ENCODE measurements at regions of chr15 and their contacts with region 1.

Region 1: DNA sequence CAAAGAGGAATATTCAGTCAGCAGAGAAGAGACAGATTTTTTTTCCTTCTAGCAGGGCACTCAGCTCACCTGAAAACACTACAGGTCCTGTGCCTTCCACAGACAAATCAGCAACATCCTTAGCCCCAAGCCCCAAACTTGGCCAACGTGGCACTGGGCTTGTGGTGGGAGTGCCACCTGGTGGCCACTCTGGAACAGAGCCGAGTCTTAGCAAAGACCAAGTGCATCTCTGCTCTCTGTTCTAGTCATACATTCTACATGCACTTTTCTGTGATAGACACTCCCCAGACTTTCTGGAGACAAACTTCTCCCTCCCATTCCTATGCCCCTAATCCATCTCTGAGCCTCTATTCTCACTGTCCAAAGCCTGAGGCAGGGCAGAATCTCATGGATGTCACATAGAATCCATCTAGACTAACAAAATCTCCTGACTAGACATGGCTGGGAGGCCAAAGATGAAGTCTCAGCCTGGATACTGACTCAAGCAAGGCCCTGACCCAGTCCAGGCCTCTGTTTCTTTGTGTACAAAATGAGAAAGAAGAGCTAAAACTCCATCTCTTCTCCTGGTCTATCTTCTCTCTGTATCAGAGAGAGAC is 5.1 kb upstream of the SEMA7A start:
- DNase-seq: peak; percentile 77
- H3K4me3 Mint-ChIP-seq: no peak overlapping the region
- H3K27ac Mint-ChIP-seq: no peak overlapping the region
- H3K4me1 Mint-ChIP-seq: no peaks in the 10 kb centered on the region
- H3K27me3 Mint-ChIP-seq: no peaks in the 10 kb centered on the region
- CTCF ChIP-seq: peak; percentile 86

Region 2: DNA sequence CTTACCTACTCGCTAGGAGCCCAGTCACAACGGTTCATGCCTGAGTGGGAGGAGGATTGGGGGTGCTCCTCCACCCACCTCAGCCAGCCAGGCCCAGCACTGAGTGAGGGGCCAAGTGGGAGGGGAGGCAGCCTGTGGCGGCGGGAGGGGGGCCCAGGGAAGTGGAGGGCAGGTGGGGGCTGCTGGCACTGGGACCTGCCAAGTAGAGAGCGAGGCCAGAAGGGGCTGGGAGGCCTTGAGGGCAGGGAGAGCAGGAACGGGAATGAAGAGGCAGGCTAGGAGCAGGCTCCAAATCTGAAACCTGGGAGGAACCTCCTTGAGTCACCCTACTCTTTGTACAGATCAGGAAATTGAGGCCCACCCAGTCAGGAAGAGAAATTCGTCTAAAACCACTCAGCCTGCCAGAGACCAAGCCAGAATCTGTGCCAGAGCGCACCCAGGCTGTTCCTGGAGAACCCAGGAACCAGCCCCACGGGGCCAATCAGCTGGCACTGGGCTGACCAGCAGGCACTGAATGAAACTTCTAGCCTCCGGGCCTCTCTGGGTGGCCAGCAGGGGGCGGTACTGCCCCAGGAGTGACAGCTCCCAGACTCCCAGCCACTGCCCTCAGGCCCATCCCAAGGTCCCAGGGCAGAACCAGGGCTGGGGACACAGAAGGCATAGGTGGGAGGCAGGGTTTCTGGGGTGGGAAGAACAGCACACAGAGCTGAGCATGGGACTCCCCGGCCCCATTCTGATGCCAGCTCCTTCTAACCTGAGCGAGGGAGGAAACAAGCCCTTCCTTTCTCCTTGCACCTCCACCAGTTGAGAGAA is 56.6 kb before region 1 on chr15:
- CTCF ChIA-PET with region 1: interaction called, 112 read pairs
- POLR2A ChIA-PET with region 1: interaction called, 4 read pairs
- intact Hi-C with region 1: loop called (anchors 1 kb)
- DNase-seq: peak; percentile 84
- H3K4me3 Mint-ChIP-seq: no peak overlapping the region
- H3K27ac Mint-ChIP-seq: no peak overlapping the region
- H3K4me1 Mint-ChIP-seq: peaks cover 17% of the 10 kb centered on the region
- H3K27me3 Mint-ChIP-seq: no peaks in the 10 kb centered on the region
- CTCF ChIP-seq: peak; percentile 98

Region 3: DNA sequence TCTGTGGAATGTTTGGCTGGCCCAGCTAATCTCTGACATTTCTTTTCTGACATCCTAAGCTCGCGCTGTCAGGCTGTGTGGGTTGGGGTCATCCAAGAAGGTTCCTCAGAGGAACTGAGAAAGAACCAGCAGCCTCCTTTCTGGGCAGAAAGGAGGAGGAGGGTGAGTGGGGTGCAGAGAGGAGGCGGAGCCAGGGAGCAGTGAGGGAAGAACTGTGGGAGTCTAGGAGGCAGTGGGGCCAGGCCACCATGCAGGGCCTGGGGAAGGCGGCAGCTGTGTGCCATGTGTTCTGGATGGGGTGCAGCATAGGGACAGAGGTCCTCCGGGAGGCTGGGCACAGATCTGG is 10.4 kb before region 1 on chr15:
- CTCF ChIA-PET with region 1: interaction called, 15 read pairs
- POLR2A ChIA-PET with region 1: no interaction called
- intact Hi-C with region 1: no loop called
- DNase-seq: no peak
- H3K4me3 Mint-ChIP-seq: no peak overlapping the region
- H3K27ac Mint-ChIP-seq: no peak overlapping the region
- H3K4me1 Mint-ChIP-seq: peaks cover 5% of the 10 kb centered on the region
- H3K27me3 Mint-ChIP-seq: no peaks in the 10 kb centered on the region
- CTCF ChIP-seq: no peak

Region 4: DNA sequence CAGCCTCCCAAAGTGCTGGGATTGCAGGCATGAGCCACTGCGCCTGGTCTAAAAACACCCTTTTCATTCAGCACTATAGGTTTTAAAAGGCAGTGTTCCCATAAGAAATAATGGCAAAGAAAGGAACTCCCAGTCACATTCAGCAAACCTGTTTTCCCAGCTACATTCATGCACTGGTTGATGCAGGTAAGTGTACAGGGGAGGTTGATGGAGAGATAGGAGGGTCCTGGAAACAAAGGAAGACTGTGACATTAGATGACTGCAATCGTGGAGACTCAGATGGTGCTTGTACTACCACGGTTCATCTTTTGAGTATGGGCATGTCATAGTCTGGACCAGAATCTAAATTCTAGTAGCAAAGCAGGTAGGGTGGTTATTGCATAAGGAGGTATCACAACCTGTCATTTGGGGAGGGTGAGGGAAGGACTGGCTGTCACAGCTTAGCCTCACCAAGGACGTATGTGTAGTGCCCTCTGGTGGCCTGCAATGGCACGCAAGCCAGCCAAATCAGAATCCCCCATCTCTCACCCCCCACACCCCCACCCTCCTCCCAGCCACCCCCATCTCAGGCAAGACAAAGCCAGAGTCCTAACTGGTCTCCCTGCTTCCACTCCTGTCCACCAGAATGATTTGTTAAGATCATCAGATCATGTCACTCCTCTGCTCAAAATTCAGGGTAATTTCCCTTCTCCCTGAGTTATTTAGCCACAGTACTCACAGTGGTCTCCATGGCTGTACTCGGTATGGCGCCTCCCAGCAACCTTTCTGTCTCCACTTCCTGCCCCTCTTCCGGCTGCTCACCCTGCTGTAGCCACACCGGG is 50.9 kb after region 1 on chr15:
- CTCF ChIA-PET with region 1: interaction called, 4 read pairs
- POLR2A ChIA-PET with region 1: no interaction called
- intact Hi-C with region 1: loop called (anchors 2 kb)
- DNase-seq: peak; percentile 53
- H3K4me3 Mint-ChIP-seq: no peak overlapping the region
- H3K27ac Mint-ChIP-seq: no peak overlapping the region
- H3K4me1 Mint-ChIP-seq: no peaks in the 10 kb centered on the region
- H3K27me3 Mint-ChIP-seq: no peaks in the 10 kb centered on the region
- CTCF ChIP-seq: peak; percentile 70

Region 5: GRCh38 chr15:74889883-74890664 is 451.3 kb after region 1 on chr15 and contains the start of gene MPI:
- CTCF ChIA-PET with region 1: no interaction called
- POLR2A ChIA-PET with region 1: no interaction called
- intact Hi-C with region 1: no loop called
- DNase-seq: peak; percentile 73
- H3K4me3 Mint-ChIP-seq: peak within 1 kb of the TSS; percentile 79
- H3K27ac Mint-ChIP-seq: peak within 1 kb of the TSS; percentile 11
- H3K4me1 Mint-ChIP-seq: peaks cover 25% of the 10 kb centered on the region
- H3K27me3 Mint-ChIP-seq: no peaks in the 10 kb centered on the region
- CTCF ChIP-seq: no peak
- total RNA-seq, gene MPI: 30.8 and 31.4 TPM in 2 replicates

Measured in MCF 10A (cell line).